ENCODE measurements at regions of chr5 and their contacts with region 1.

Region 1: GRCh38 chr5:132820162-132820754 is 7.2 kb downstream of the SOWAHA start:
- DNase-seq: peak; percentile 92

Region 2: DNA sequence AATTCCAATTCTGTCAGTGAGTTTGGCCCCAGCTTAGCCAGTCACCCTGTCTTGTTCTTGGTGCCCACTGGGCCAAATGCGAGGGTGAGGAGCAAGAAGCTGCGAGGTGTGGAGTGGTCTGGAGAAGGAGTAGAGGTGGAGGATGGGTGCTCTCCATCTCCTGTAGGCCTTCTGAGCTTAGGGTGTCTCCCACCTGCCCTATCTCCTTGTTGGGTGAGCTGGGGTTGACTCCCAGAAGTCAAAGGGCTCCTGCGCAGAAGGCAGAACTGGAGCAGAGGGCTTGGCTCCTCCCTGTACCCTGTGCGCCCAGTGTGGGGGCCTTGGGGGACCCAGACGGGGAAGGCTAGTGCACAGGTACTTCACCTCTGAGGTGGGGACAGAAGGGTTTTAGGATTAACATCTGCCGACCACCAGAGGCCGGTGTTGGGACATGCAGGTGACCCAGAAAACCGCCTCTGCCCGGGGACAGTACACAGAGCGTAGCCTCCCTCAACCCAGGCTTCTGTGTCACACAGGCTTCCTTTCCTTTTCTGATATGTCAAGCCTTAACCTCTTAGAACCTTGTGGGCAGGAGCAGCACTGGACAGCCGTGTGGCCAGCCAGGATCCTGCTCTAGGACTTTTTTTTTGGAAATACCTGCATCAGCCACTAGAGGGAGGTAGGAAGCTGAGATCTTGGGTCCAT is 293.8 kb before region 1 on chr5:
- intact Hi-C with region 1: loop called (anchors 5 kb)
- DNase-seq: no peak

Region 3: DNA sequence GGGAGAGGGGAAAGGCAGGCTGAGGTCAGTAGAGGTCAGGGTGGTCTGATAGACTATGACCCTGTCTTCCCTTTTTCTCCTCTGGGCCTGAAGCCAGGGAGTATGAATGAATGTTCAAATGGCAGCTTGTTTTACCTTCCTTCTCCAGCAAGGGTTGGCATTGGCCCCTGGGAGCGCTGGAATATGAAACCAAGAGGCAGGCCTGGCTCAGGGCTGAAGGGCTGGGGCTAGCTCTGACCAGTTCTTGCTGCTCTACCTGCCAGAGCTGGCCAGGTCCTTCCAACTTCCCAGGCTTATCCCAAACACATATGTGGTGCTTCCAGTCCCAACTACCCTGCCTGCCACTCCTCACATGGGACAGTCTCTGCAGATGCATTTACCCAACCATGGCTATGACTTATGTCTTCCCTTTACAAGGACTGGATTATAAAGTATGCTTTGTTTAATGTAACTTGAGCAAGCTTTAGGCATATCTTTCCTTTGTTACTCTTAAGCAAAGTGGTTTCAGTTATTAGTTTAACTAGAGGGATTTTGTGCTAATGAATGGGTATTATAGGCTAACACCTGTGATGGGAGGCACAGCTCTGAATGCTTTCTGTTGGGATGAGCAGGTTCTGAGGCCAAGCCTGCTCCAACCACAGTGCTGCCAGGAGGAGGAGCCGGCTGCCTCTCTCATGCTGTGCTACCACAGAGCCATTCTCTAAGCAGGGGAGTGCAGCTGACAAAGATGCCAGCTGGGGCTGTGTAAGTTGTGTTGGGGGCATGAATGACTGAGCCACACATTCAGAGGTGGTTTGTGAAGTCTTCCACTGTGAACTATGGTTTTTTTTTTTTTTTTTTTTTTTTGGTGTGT is 66.9 kb before region 1 on chr5:
- intact Hi-C with region 1: loop called (anchors 2 kb)
- DNase-seq: peak; percentile 57

Region 4: GRCh38 chr5:132777209-132778069 is 42.8 kb before region 1 on chr5 and contains the start of gene SEPTIN8:
- intact Hi-C with region 1: loop called (anchors 5 kb)
- DNase-seq: peak; percentile 78
- total RNA-seq, gene SEPTIN8: 45.2 TPM

Region 5: GRCh38 chr5:133179405-133179804 is 359.1 kb after region 1 on chr5:
- intact Hi-C with region 1: no loop called
- DNase-seq: no peak